HepG2 (cell line): ENCODE measurements at regions of chr4 and their contacts with region 1.

Region 1: DNA sequence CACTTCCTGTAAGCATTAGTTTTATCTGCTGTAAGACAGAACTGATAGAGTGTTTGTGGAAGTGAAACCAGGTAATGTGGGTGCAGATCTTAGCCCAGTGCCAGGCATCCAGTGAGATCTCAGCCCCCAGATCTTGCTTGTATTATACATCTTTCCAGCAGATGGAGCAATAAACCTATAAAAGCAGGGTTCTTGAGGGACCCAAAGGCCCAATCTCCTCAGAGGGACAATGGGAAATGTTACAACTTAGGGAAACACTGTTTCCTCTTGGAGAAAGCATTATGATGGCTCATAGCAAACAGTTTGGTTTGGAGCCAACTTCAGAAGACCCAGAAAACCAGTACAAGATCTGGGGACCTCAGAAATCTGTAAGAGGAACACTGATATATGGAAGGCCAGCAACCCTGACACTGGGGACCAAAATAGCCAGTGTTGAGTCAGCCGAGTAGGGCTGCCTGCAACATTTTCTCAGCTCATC is 206.3 kb downstream of the SLC7A11 start:
- DNase-seq: peak; percentile 52
- ATAC-seq: peak; percentile 98
- H3K4me3 ChIP-seq: no peak overlapping the region
- H3K27ac ChIP-seq: no peak overlapping the region
- H3K4me1 ChIP-seq: no peaks in the 10 kb centered on the region
- H3K27me3 ChIP-seq: no peaks in the 10 kb centered on the region; a peak in 1 of 5 replicates
- CTCF ChIP-seq: peak; percentile 84
- EP300 ChIP-seq: no peak
- POLR2A ChIP-seq: no peak
- RAD21 ChIP-seq: peak; percentile 79

Region 2: GRCh38 chr4:138090150-138090917 is 54.5 kb after region 1 on chr4:
- CTCF ChIA-PET with region 1: interaction called, 13 read pairs
- POLR2A ChIA-PET with region 1: no interaction called
- in situ Hi-C with region 1: loop called (anchors 5 kb)
- intact Hi-C with region 1: loop called (anchors 1 kb)
- DNase-seq: peak; percentile 64
- ATAC-seq: peak; percentile 87
- H3K4me3 ChIP-seq: peak overlapping the region in 1 of 3 experiments; percentile 24; a peak in 1 of 6 replicates
- H3K27ac ChIP-seq: no peak overlapping the region
- H3K4me1 ChIP-seq: peaks cover 30% of the 10 kb centered on the region
- H3K27me3 ChIP-seq: no peaks in the 10 kb centered on the region
- CTCF ChIP-seq: peak; percentile 80
- EP300 ChIP-seq: no peak
- POLR2A ChIP-seq: no peak
- RAD21 ChIP-seq: 0 out of 2 replicates have a peak, but pooled peaks have one; percentile 45

Region 3: DNA sequence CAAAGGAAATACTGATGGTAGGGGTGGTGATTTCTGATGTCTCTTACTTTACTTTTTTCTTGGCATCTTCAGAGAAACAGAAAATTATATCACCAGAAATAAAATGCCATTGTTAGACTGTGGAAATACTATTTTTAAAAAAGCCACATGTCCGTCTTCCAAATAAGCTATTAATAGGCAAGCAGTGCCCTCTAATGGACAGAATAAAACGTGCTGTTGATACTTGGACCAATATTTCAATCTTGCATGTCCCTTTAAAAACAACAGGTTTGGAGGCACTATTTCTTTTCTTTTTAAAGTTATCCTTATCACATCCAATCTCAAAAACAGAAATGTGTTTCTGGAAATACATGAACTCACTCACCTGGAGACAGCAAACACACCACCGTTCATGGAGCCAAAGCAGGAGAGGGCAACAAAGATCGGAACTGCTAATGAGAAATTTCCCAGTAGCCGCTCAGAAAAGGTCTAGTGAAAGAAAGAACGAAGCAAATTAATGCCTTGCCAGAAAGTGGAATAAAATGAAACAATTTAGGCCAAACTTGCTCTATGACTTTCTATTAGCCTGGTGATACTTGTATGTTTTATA is 147.1 kb after region 1 on chr4:
- CTCF ChIA-PET with region 1: interaction called, 28 read pairs
- POLR2A ChIA-PET with region 1: no interaction called
- in situ Hi-C with region 1: loop called (anchors 5 kb)
- intact Hi-C with region 1: loop called (anchors 1 kb)
- DNase-seq: peak; percentile 56
- ATAC-seq: no peak
- H3K4me3 ChIP-seq: no peak overlapping the region
- H3K27ac ChIP-seq: no peak overlapping the region
- H3K4me1 ChIP-seq: no peaks in the 10 kb centered on the region
- H3K27me3 ChIP-seq: no peaks in the 10 kb centered on the region
- CTCF ChIP-seq: peak; percentile 67
- EP300 ChIP-seq: no peak
- POLR2A ChIP-seq: no peak
- RAD21 ChIP-seq: 0 out of 2 replicates have a peak, but pooled peaks have one; percentile 17

Region 4: GRCh38 chr4:138199568-138200235 is 163.9 kb after region 1 on chr4:
- CTCF ChIA-PET with region 1: no interaction called
- POLR2A ChIA-PET with region 1: no interaction called
- in situ Hi-C with region 1: no loop called
- intact Hi-C with region 1: no loop called
- DNase-seq: peak; percentile 98
- ATAC-seq: peak; percentile 100
- H3K4me3 ChIP-seq: peak overlapping the region in 2 of 3 experiments; percentile 3 to 40; a peak in 2 of 6 replicates
- H3K27ac ChIP-seq: peak overlapping the region; percentile 90
- H3K4me1 ChIP-seq: peaks cover 60% of the 10 kb centered on the region
- H3K27me3 ChIP-seq: no peaks in the 10 kb centered on the region
- CTCF ChIP-seq: no peak
- EP300 ChIP-seq: peak; percentile 31 to 94; a peak in 2 of 4 replicates
- POLR2A ChIP-seq: peak in 1 of 2 experiments; percentile 72; a peak in 2 of 4 replicates
- RAD21 ChIP-seq: no peak; the same call in 1 of the 2 replicates

Region 5: GRCh38 chr4:138494931-138495330 is 459.1 kb after region 1 on chr4:
- CTCF ChIA-PET with region 1: no interaction called
- POLR2A ChIA-PET with region 1: no interaction called
- in situ Hi-C with region 1: loop called (anchors 25 kb)
- intact Hi-C with region 1: loop called (anchors 1 kb)
- DNase-seq: peak; percentile 12
- ATAC-seq: peak; percentile 95
- H3K4me3 ChIP-seq: no peak overlapping the region
- H3K27ac ChIP-seq: no peak overlapping the region
- H3K4me1 ChIP-seq: no peaks in the 10 kb centered on the region
- H3K27me3 ChIP-seq: no peaks in the 10 kb centered on the region
- CTCF ChIP-seq: peak; percentile 56
- EP300 ChIP-seq: no peak
- POLR2A ChIP-seq: no peak
- RAD21 ChIP-seq: no peak

Region 6: DNA sequence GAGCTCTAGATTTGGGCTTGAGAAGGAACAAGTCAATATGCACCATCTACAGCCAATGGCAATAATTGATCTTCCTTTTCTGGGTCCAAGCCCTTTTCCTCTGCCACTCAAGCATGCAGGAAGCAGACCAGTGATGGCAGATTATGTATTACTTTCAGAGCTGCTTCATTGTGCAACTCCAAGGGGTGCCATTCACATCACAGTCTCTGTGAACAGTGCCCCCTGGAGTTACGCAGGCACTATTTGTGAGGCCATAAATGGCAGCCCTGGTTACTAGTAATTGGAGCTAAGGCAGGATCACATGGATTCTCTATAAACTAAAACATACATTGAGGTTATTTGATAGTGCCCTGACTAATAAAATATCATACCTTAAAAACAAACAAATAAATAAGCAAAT is 519.8 kb after region 1 on chr4:
- CTCF ChIA-PET with region 1: no interaction called
- POLR2A ChIA-PET with region 1: no interaction called
- in situ Hi-C with region 1: no loop called
- intact Hi-C with region 1: loop called (anchors 5 kb)
- DNase-seq: peak; percentile 45
- ATAC-seq: peak; percentile 93
- H3K4me3 ChIP-seq: no peak overlapping the region
- H3K27ac ChIP-seq: no peak overlapping the region
- H3K4me1 ChIP-seq: no peaks in the 10 kb centered on the region
- H3K27me3 ChIP-seq: no peaks in the 10 kb centered on the region
- CTCF ChIP-seq: peak; percentile 56
- EP300 ChIP-seq: no peak
- POLR2A ChIP-seq: no peak
- RAD21 ChIP-seq: no peak; the same call in 1 of the 2 replicates

Region 7: DNA sequence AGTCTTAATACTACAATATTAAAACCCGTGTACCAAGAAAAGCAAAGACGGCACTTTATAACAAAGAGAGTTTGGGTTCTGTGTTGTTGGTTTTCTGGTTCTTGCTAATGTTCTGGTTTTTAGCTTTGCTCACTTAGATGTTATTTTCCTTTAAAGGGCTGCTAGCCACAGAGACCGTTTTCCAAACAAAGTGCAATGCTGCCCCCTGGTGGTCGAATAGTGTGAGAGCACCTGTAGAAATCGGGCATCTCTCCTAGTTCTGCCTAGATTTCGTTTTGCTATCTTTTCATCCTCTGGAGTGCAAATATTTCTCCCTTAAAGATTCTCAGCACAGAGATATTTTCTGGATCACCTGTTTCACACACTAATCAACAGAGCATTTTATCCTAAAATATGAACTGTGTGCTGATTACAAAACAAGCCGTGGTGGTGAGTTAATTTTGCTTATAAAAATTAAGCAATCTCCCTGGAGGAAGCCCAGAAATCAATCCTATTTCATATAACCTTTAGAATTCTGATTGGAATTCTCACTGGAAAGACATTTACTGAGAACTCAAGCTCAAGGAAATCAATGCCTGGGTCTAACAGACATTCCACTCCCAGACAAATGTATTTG is 645.3 kb after region 1 on chr4:
- CTCF ChIA-PET with region 1: interaction called, 3 read pairs
- POLR2A ChIA-PET with region 1: no interaction called
- in situ Hi-C with region 1: loop called (anchors 5 kb)
- intact Hi-C with region 1: loop called (anchors 1 kb)
- DNase-seq: peak; percentile 58
- ATAC-seq: peak; percentile 90
- H3K4me3 ChIP-seq: no peak overlapping the region
- H3K27ac ChIP-seq: no peak overlapping the region
- H3K4me1 ChIP-seq: no peaks in the 10 kb centered on the region
- H3K27me3 ChIP-seq: peaks cover 1 to 18% of the 10 kb centered on the region in 2 experiments; a peak in 4 of 5 replicates
- CTCF ChIP-seq: peak; percentile 83
- EP300 ChIP-seq: no peak
- POLR2A ChIP-seq: no peak
- RAD21 ChIP-seq: peak; percentile 80